Mammary epithelial cell (primary cell): ENCODE measurements at regions of chr11 and their contacts with region 1.

Region 1: GRCh38 chr11:63986156-63986931 is at the start of gene OTUB1:
- DNase-seq: peak; percentile 97
- H3K4me3 ChIP-seq: peak within 1 kb of the TSS; percentile 83 to 99 (median 89)
- H3K27ac ChIP-seq: peak within 1 kb of the TSS; percentile 76
- H3K4me1 ChIP-seq: peaks cover 20% of the 10 kb centered on the region
- H3K27me3 ChIP-seq: no peaks in the 10 kb centered on the region
- CTCF ChIP-seq: no peak
- total RNA-seq, gene OTUB1: 48.0 to 101 TPM

Region 2: GRCh38 chr11:63974259-63975143 is 11.8 kb before region 1 on chr11 and contains the start of gene COX8A:
- CTCF ChIA-PET with region 1: no interaction called
- dilution Hi-C with region 1: no loop called
- in situ Hi-C with region 1: no loop called
- intact Hi-C with region 1: loop called (anchors 1 kb)
- DNase-seq: peak; percentile 100
- H3K4me3 ChIP-seq: peak within 1 kb of the TSS; percentile 88 to 100 (median 100)
- H3K27ac ChIP-seq: peak within 1 kb of the TSS; percentile 87
- H3K4me1 ChIP-seq: peaks cover 10% of the 10 kb centered on the region
- H3K27me3 ChIP-seq: no peaks in the 10 kb centered on the region
- CTCF ChIP-seq: peak in 1 of 2 donors; percentile 28
- total RNA-seq, gene COX8A: 185 to 338 TPM

Region 3: GRCh38 chr11:64000026-64000739 is 13.8 kb after region 1 on chr11:
- CTCF ChIA-PET with region 1: no interaction called
- dilution Hi-C with region 1: no loop called
- in situ Hi-C with region 1: no loop called
- intact Hi-C with region 1: loop called (anchors 1 kb)
- DNase-seq: peak; percentile 35
- H3K4me3 ChIP-seq: peak overlapping the region in 1 of 3 experiments; percentile 30
- H3K27ac ChIP-seq: no peak overlapping the region
- H3K4me1 ChIP-seq: peaks cover 29% of the 10 kb centered on the region
- H3K27me3 ChIP-seq: no peaks in the 10 kb centered on the region
- CTCF ChIP-seq: peak; percentile 29 to 65